ENCODE measurements at regions of chr12 and their contacts with region 1.

Region 1: DNA sequence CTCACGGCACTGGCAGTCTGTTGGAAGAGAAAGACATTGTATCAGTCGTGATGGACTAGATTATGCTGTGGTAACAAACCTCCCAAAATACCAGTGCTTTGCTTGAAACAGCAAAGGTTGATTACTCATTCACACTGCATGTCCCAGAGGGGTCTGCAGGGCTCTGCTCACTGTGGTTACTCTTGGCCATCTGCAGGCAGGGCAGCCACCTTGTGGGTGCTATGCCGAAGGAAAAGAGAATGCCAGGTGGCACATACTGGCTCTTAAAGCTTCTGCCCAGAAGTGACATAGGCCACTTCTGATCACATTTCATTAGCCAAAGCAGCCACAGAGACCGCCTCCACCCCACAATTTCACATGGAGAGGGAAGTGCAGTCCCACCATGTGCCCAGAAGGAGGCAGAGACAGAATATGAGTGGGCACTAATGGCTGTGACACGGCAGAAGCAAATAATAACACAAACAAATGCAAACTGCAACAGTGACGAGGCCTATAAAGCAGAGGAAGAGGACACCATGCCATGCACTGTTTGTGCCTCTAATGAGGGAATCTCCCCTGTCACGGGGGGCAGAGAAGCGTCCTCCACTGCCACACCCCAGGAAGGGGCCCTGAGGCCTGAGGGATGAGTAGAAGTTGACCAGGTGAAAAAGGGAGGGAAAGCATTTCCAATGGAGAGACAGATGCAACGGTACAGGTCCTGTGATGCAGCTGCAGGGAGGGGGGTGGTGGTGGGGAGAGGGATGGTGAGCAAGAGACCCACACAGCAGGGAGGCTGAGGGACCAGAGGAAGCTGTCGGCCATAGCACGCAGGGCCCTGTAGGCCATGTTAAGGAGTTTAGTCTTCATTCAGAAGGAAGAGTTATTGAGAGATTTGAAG is 51.7 kb upstream of the KICS2 start:
- DNase-seq: no peak
- H3K4me3 Mint-ChIP-seq: no peak overlapping the region
- H3K27ac Mint-ChIP-seq: no peak overlapping the region
- H3K4me1 Mint-ChIP-seq: no peaks in the 10 kb centered on the region
- H3K27me3 Mint-ChIP-seq: peaks cover 5% of the 10 kb centered on the region

Region 2: GRCh38 chr12:64392221-64392620 is 118.5 kb after region 1 on chr12:
- intact Hi-C with region 1: loop called (anchors 2 kb)
- DNase-seq: no peak
- H3K4me3 Mint-ChIP-seq: no peak overlapping the region
- H3K27ac Mint-ChIP-seq: no peak overlapping the region
- H3K4me1 Mint-ChIP-seq: peaks cover 3% of the 10 kb centered on the region
- H3K27me3 Mint-ChIP-seq: peaks cover 13% of the 10 kb centered on the region